ENCODE measurements at regions of chrX and their contacts with region 1.

Region 1: GRCh38 chrX:153763989-153764755 is at the start of gene PLXNB3:
- DNase-seq: peak; percentile 67 to 84
- ATAC-seq: peak; percentile 88 to 94 (median 93)
- H3K4me3 ChIP-seq: no peak within 1 kb of the TSS
- H3K4me3 Mint-ChIP-seq: no peak within 1 kb of the TSS
- H3K27ac ChIP-seq: no peak within 1 kb of the TSS
- H3K27ac Mint-ChIP-seq: no peak within 1 kb of the TSS
- H3K4me1 ChIP-seq: peaks cover 18% of the 10 kb centered on the region
- H3K4me1 Mint-ChIP-seq: peaks cover 0 to 20% of the 10 kb centered on the region in 2 donors
- H3K27me3 ChIP-seq: no peaks in the 10 kb centered on the region
- H3K27me3 Mint-ChIP-seq: no peaks in the 10 kb centered on the region
- CTCF ChIP-seq: peak; percentile 64
- total RNA-seq, gene PLXNB3: 1.2 to 1.3 TPM in 2 of 3 donors, not detected in the other

Region 2: GRCh38 chrX:153953342-153953830 is 189.2 kb after region 1 on chrX:
- intact Hi-C with region 1: loop called (anchors 1 kb)
- DNase-seq: peak; percentile 70 to 83
- ATAC-seq: peak; percentile 76 to 89 (median 79)
- H3K4me3 ChIP-seq: no peak overlapping the region
- H3K4me3 Mint-ChIP-seq: no peak overlapping the region
- H3K27ac ChIP-seq: no peak overlapping the region
- H3K27ac Mint-ChIP-seq: peak overlapping the region; percentile 56 to 73
- H3K4me1 ChIP-seq: peaks cover 26% of the 10 kb centered on the region
- H3K4me1 Mint-ChIP-seq: peaks cover under 1 to 6% of the 10 kb centered on the region in 2 donors
- H3K27me3 ChIP-seq: no peaks in the 10 kb centered on the region
- H3K27me3 Mint-ChIP-seq: no peaks in the 10 kb centered on the region
- CTCF ChIP-seq: peak; percentile 85

Measured in natural killer cell (primary cell).